ENCODE measurements at regions of chr4 and their contacts with region 1.

Region 1: GRCh38 chr4:82462415-82462831 is 32.0 kb downstream of the ENOPH1 start:
- DNase-seq: peak; percentile 92 to 93
- H3K4me3 ChIP-seq: no peak overlapping the region
- H3K27ac ChIP-seq: peak overlapping the region in 1 of 2 donors; percentile 50
- H3K4me1 ChIP-seq: peaks cover 0 to 12% (median 0%) of the 10 kb centered on the region in 4 donors
- H3K27me3 ChIP-seq: no peaks in the 10 kb centered on the region
- CTCF ChIP-seq: peak; percentile 59 to 87

Region 2: GRCh38 chr4:82798168-82799005 is 336.0 kb after region 1 on chr4 and contains the start of gene SCD5:
- intact Hi-C with region 1: loop called (anchors 10 kb)
- DNase-seq: peak; percentile 60 to 75
- H3K4me3 ChIP-seq: peak within 1 kb of the TSS; percentile 84 to 89
- H3K27ac ChIP-seq: peak within 1 kb of the TSS; percentile 50 to 56
- H3K4me1 ChIP-seq: peaks cover 0 to 27% (median 16%) of the 10 kb centered on the region in 4 donors
- H3K27me3 ChIP-seq: no peaks in the 10 kb centered on the region
- CTCF ChIP-seq: no peak

Region 3: DNA sequence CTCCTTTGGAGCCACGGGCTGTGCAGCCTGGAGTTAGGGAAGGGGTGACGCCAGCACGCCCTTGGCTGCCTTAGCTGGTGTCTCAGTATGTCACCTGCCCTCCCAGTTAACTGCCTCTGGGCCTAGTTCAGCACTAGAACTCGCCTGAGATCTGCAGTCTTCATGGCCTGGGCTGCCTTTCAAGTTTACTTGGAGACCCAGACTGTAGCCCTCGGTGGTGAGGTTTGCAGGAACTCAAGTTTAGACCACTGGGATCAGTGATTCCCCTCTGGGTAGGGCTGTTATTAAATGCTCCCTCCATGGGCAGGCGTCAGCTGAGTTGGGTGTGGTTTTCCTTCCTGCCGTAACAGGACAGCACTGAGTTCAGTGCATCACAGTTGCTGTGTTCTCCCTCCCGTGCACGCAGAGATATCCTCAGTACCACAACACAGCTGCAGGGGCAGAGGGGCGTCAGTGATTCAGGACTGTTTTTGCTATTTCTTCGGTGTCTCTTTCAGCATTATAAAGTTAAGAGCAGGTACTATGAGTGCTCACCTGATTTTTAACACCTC is 621.6 kb after region 1 on chr4:
- intact Hi-C with region 1: loop called (anchors 10 kb)
- DNase-seq: no peak
- H3K4me3 ChIP-seq: no peak overlapping the region
- H3K27ac ChIP-seq: no peak overlapping the region
- H3K4me1 ChIP-seq: no peaks in the 10 kb centered on the region
- H3K27me3 ChIP-seq: no peaks in the 10 kb centered on the region
- CTCF ChIP-seq: no peak

Region 4: GRCh38 chr4:83252782-83253405 is 790.5 kb after region 1 on chr4:
- intact Hi-C with region 1: loop called (anchors 5 kb)
- DNase-seq: peak in 1 of 2 donors; percentile 55
- H3K4me3 ChIP-seq: no peak overlapping the region
- H3K27ac ChIP-seq: no peak overlapping the region
- H3K4me1 ChIP-seq: peaks cover 0 to 27% (median 7%) of the 10 kb centered on the region in 4 donors
- H3K27me3 ChIP-seq: no peaks in the 10 kb centered on the region
- CTCF ChIP-seq: peak; percentile 34 to 43

Region 5: DNA sequence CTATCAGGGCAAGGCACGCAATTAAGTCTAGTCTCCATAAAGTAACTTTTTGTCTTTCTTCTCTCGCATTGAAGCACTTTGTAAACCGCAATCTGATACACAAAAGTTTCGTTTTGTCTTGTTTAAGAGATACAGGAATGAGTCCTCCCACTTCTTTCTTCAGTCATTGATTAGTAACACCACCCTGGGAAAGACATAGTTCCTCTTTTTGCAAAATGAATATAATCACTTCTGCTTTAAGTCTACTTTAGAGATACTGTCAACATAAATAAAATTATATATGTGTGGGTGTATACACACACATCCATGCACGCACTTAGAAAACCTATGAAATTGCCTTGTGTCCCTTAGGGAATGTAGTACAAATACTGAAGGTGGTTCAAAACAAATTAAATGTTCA is 810.5 kb after region 1 on chr4:
- intact Hi-C with region 1: loop called (anchors 5 kb)
- DNase-seq: no peak
- H3K4me3 ChIP-seq: no peak overlapping the region
- H3K27ac ChIP-seq: no peak overlapping the region
- H3K4me1 ChIP-seq: no peaks in the 10 kb centered on the region
- H3K27me3 ChIP-seq: no peaks in the 10 kb centered on the region
- CTCF ChIP-seq: no peak